ENCODE measurements at regions of chr1 and their contacts with region 1.

Region 1: DNA sequence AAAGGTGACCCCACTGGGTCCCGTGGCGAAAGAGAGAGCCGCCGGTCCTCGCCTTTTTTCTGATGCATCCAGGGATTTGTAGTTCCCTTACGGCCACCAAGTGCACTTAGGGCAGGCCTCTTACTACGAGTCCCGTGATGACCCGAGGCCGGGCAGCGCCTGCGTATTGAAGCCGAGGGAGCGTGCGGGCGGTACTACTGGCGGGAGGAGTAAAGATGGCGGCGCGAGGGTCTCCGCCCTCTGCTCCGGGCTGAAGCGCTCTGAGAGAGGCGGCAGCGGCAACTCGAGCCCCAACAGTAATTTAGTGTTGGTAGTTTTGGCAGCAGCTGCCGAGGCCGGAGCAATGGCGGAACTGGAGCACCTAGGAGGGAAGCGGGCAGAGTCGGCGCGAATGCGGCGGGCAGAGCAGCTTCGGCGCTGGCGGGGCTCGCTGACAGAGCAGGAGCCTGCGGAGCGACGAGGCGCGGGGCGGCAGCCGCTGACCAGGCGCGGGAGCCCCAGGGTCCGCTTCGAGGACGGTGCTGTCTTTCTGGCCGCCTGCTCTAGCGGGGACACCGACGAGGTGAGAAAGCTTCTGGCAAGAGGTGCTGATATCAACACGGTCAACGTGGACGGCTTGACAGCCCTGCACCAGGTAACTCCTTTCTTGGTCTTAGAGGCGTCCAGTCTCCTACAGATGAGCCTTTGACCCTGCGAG is at the start of gene PPP1R12B:
- DNase-seq: peak; percentile 97
- H3K4me3 Mint-ChIP-seq: peak within 1 kb of the TSS; percentile 81
- H3K27ac Mint-ChIP-seq: peak within 1 kb of the TSS; percentile 81
- H3K4me1 Mint-ChIP-seq: peaks cover 27% of the 10 kb centered on the region
- H3K27me3 Mint-ChIP-seq: no peaks in the 10 kb centered on the region
- total RNA-seq, gene PPP1R12B: 8.2 to 8.6 TPM

Region 2: GRCh38 chr1:201955009-201955728 is 393.5 kb before region 1 on chr1 and contains the start of gene TIMM17A:
- CTCF ChIA-PET with region 1: no interaction called
- POLR2A ChIA-PET with region 1: no interaction called
- intact Hi-C with region 1: loop called (anchors 10 kb)
- DNase-seq: peak; percentile 97
- H3K4me3 Mint-ChIP-seq: peak within 1 kb of the TSS; percentile 99
- H3K27ac Mint-ChIP-seq: peak within 1 kb of the TSS; percentile 87
- H3K4me1 Mint-ChIP-seq: peaks cover 20% of the 10 kb centered on the region
- H3K27me3 Mint-ChIP-seq: no peaks in the 10 kb centered on the region
- total RNA-seq, gene TIMM17A: 66.5 to 67.2 TPM

Region 3: GRCh38 chr1:202264300-202264699 is 84.4 kb before region 1 on chr1:
- CTCF ChIA-PET with region 1: no interaction called
- POLR2A ChIA-PET with region 1: no interaction called
- intact Hi-C with region 1: no loop called
- DNase-seq: no peak
- H3K4me3 Mint-ChIP-seq: no peak overlapping the region
- H3K27ac Mint-ChIP-seq: no peak overlapping the region
- H3K4me1 Mint-ChIP-seq: no peaks in the 10 kb centered on the region
- H3K27me3 Mint-ChIP-seq: peaks cover 39% of the 10 kb centered on the region

Region 4: DNA sequence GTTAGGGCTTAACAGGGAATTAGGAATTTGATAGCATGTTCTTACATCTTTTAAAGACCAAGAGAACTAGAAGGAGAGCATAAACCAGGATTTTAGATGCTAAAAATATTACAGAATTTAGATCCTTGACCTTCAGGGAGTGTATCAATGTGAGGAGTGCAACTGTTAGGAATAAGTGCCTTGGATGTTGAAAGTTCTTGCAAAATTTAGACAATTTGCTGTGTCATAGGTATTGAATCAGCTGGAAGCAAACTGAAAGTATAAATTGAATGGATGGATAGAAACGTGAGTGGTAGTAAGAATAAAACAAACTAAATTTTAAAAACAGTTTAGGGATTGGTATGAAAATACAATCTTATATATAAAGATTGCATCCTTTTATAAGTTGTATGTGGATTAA is 27.6 kb after region 1 on chr1:
- CTCF ChIA-PET with region 1: interaction called, 3 read pairs
- POLR2A ChIA-PET with region 1: no interaction called
- intact Hi-C with region 1: loop called (anchors 2 kb)
- DNase-seq: no peak
- H3K4me3 Mint-ChIP-seq: no peak overlapping the region
- H3K27ac Mint-ChIP-seq: no peak overlapping the region
- H3K4me1 Mint-ChIP-seq: peaks cover 25% of the 10 kb centered on the region
- H3K27me3 Mint-ChIP-seq: no peaks in the 10 kb centered on the region

Region 5: DNA sequence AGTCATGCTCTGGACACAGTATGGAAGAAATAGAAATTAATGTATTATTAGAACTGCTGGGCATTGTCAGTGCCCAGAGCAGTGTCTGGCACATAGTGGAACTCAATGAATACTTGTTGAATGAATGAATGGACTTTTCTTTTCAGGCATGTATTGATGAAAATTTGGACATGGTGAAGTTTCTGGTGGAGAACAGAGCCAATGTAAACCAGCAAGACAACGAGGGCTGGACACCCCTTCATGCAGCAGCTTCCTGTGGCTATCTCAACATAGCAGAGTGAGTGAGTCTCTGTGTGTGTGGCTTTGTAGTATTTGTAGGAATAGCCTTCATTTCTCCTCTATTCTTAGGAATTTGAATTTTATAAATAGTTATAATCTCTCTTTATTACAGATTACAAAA is 68.0 kb after region 1 on chr1:
- CTCF ChIA-PET with region 1: no interaction called
- POLR2A ChIA-PET with region 1: no interaction called
- intact Hi-C with region 1: no loop called
- DNase-seq: no peak
- H3K4me3 Mint-ChIP-seq: no peak overlapping the region
- H3K27ac Mint-ChIP-seq: no peak overlapping the region
- H3K4me1 Mint-ChIP-seq: no peaks in the 10 kb centered on the region
- H3K27me3 Mint-ChIP-seq: no peaks in the 10 kb centered on the region

Region 6: DNA sequence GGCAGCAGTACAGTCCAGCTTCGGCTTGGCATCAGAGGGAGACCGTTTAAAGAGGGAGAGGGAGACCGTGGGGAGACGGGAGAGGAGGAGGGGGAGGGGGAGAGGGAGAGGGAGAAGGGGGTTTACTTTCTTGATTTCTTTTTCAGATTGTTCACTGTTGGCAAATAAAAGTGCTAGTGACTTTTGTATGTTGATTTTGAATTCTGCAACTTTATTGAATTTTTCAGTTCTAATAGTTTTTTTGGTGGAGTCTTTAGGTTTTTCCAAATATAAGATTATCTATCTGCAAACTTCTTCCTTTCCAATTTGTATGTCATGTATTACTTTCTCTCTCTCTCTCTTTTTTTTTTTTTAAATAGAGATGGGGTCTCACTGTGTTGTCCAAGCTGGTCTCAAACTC is 103.8 kb after region 1 on chr1:
- CTCF ChIA-PET with region 1: no interaction called
- POLR2A ChIA-PET with region 1: no interaction called
- intact Hi-C with region 1: loop called (anchors 10 kb)
- DNase-seq: no peak
- H3K4me3 Mint-ChIP-seq: no peak overlapping the region
- H3K27ac Mint-ChIP-seq: no peak overlapping the region
- H3K4me1 Mint-ChIP-seq: peaks cover 11% of the 10 kb centered on the region
- H3K27me3 Mint-ChIP-seq: no peaks in the 10 kb centered on the region

Region 7: DNA sequence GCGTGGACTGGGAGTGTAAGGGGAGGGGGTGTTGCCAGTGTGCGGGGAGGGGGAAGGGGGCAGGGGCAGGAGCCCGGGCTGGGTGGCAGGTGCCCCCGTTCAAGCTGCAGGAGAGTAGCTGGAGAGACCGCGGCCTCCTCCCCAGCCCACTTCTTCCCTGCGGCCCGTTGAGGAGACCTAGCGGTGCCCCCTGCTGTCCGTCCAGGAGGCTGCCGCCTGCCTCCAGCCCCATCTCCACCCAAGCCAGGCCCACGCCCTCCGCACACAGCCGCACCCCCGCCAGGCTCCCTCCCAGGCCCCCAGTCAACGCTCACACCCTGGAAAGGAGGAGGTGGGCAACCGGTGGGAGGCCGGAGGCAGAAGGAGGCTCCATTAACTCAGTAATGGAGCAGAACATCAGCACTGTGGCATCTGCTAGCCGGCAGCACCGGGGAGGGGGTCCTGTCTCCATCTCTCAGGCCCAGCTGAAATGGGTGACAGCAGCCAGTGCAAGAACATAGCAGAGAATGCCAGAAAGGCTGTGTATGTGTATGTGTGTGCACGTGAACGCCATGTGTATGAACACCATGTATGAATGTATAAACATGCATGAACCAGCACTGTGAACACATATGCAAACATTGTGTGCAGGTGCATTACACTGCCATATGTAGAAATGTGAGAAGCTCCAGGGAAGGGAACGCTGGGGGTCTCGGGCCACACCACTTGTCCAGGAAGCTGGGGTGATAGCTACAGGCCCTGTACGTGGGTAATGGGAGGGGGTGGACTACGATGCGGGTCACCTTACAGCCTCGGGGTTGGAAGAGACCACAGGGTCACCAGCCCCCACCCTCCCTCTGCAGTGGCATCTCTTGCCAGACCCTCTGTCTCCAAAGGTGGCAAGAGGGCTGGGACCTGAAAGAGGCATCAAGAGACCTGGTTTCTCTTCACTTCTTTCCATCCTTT is 277.0 kb after region 1 on chr1:
- CTCF ChIA-PET with region 1: no interaction called
- POLR2A ChIA-PET with region 1: no interaction called
- intact Hi-C with region 1: loop called (anchors 10 kb)
- DNase-seq: peak; percentile 76
- H3K4me3 Mint-ChIP-seq: no peak overlapping the region
- H3K27ac Mint-ChIP-seq: no peak overlapping the region
- H3K4me1 Mint-ChIP-seq: peaks cover 35% of the 10 kb centered on the region
- H3K27me3 Mint-ChIP-seq: peaks cover 2% of the 10 kb centered on the region

Region 8: GRCh38 chr1:202810615-202811295 is 462.1 kb after region 1 on chr1 and contains the start of gene PCAT6:
- CTCF ChIA-PET with region 1: no interaction called
- POLR2A ChIA-PET with region 1: no interaction called
- intact Hi-C with region 1: loop called (anchors 2 kb)
- DNase-seq: peak; percentile 92
- H3K4me3 Mint-ChIP-seq: peak within 1 kb of the TSS; percentile 87
- H3K27ac Mint-ChIP-seq: peak within 1 kb of the TSS; percentile 69
- H3K4me1 Mint-ChIP-seq: peaks cover 34% of the 10 kb centered on the region
- H3K27me3 Mint-ChIP-seq: no peaks in the 10 kb centered on the region
- total RNA-seq, gene PCAT6: 0.76 to 0.77 TPM

Region 9: GRCh38 chr1:203326830-203327683 is 978.4 kb after region 1 on chr1:
- CTCF ChIA-PET with region 1: no interaction called
- POLR2A ChIA-PET with region 1: no interaction called
- intact Hi-C with region 1: loop called (anchors 10 kb)
- DNase-seq: peak; percentile 96
- H3K4me3 Mint-ChIP-seq: peak overlapping the region; percentile 75
- H3K27ac Mint-ChIP-seq: peak overlapping the region; percentile 94
- H3K4me1 Mint-ChIP-seq: peaks cover 55% of the 10 kb centered on the region
- H3K27me3 Mint-ChIP-seq: no peaks in the 10 kb centered on the region

Measured in activated CD4-positive, alpha-beta memory T cell treated with anti-CD3 and anti-CD28 coated beads for 36 hours (primary cell).